GM23248 (cell line): ENCODE measurements at regions of chrX and their contacts with region 1.

Region 1: DNA sequence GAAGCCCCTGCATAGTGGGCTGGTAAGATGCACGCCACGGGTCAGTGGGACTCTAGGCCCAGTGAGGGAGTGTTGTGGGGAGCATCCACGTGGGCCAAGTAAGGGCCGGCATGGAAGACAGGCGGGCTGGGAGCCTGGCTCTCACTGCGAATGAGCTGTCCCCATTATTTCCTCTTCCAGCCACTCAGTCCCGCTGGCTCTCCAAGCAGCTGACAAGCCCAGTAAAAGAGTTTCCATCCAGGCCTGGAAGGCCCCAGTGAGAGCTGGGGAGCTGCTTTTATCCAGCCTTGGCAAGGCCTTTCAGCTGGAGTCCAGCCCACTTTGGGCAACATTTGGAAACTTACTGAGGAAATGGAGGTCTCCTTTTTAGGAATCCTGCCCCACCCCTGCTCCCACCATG is 24.9 kb downstream of the APLN start:
- DNase-seq: no peak
- H3K4me3 ChIP-seq: no peak overlapping the region
- H3K27ac ChIP-seq: no peak overlapping the region
- H3K4me1 ChIP-seq: no peaks in the 10 kb centered on the region
- H3K27me3 ChIP-seq: no peaks in the 10 kb centered on the region

Region 2: GRCh38 chrX:129731228-129731627 is 101.4 kb after region 1 on chrX:
- in situ Hi-C with region 1: loop called (anchors 5 kb)
- DNase-seq: no peak
- H3K4me3 ChIP-seq: no peak overlapping the region
- H3K27ac ChIP-seq: no peak overlapping the region
- H3K4me1 ChIP-seq: no peaks in the 10 kb centered on the region
- H3K27me3 ChIP-seq: no peaks in the 10 kb centered on the region